Activated CD4-positive, alpha-beta T cell treated with anti-CD3 and anti-CD28 coated beads for 36 hours (primary cell): ENCODE measurements at regions of chr15 and their contacts with region 1.

Region 1: GRCh38 chr15:73972984-73973682 is 19.0 kb downstream of the STOML1 start:
- DNase-seq: peak; percentile 91
- ATAC-seq: peak; percentile 88
- H3K4me3 Mint-ChIP-seq: peak overlapping the region; percentile 8
- H3K27ac Mint-ChIP-seq: no peak overlapping the region
- H3K4me1 Mint-ChIP-seq: peaks cover 27% of the 10 kb centered on the region
- H3K27me3 Mint-ChIP-seq: peaks cover 12% of the 10 kb centered on the region

Region 2: DNA sequence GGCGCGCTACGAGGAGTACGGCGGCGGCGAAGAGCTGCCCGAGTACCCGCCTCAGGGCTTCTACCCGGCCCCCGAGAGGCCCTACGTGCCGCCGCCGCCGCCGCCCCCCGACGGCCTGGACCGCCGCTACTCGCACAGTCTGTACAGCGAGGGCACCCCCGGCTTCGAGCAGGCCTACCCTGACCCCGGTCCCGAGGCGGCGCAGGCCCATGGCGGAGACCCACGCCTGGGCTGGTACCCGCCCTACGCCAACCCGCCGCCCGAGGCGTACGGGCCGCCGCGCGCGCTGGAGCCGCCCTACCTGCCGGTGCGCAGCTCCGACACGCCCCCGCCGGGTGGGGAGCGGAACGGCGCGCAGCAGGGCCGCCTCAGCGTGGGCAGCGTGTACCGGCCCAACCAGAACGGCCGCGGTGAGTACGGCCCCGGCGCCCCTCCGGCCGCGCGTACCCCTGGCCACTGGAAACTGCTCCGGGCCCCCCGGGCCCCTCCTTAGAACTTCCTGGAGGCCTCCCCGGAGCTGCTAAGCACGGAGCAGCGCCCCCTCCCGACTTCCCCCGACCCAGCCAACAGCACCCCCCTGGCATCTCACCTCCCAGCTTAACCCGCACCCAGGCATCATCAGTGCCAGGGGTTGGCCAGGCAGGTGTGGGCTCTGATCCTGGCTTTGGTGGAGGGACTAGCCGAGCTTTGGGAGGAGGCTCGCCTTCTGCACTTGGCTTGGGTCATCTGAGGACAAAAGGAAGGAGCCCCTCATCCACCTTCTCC is 45.5 kb before region 1 on chr15:
- CTCF ChIA-PET with region 1: interaction called, 10 read pairs
- POLR2A ChIA-PET with region 1: no interaction called
- intact Hi-C with region 1: loop called in 1 of 2 experiments (anchors 5 kb)
- DNase-seq: peak; percentile 87
- ATAC-seq: peak; percentile 77
- H3K4me3 Mint-ChIP-seq: peak overlapping the region; percentile 72
- H3K27ac Mint-ChIP-seq: peak overlapping the region; percentile 42
- H3K4me1 Mint-ChIP-seq: peaks cover 35% of the 10 kb centered on the region
- H3K27me3 Mint-ChIP-seq: no peaks in the 10 kb centered on the region

Region 3: DNA sequence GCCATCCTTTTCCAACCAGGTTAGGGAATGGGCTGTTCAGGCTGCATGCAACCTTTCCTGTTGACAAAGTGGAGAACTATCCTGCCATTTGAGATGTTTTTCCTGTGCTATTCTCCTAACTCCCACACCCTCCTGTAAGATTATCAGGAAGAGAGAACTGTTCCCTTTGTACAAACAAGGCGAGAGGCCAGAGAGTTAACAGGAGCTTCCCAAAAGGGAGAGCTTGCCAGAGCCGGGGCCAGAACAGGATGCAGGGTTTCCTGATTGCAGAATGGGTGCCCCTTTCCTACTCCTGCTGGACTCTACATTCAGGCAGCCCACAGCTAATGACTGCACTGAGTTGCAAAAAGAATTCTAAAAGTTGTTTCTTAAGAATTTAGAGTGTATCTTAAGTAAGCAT is 38.5 kb after region 1 on chr15:
- CTCF ChIA-PET with region 1: interaction called, 13 read pairs
- POLR2A ChIA-PET with region 1: interaction called, 6 read pairs
- intact Hi-C with region 1: loop called in 1 of 2 experiments (anchors 5 kb)
- DNase-seq: no peak
- ATAC-seq: no peak
- H3K4me3 Mint-ChIP-seq: no peak overlapping the region
- H3K27ac Mint-ChIP-seq: no peak overlapping the region
- H3K4me1 Mint-ChIP-seq: peaks cover 53% of the 10 kb centered on the region
- H3K27me3 Mint-ChIP-seq: no peaks in the 10 kb centered on the region

Region 4: DNA sequence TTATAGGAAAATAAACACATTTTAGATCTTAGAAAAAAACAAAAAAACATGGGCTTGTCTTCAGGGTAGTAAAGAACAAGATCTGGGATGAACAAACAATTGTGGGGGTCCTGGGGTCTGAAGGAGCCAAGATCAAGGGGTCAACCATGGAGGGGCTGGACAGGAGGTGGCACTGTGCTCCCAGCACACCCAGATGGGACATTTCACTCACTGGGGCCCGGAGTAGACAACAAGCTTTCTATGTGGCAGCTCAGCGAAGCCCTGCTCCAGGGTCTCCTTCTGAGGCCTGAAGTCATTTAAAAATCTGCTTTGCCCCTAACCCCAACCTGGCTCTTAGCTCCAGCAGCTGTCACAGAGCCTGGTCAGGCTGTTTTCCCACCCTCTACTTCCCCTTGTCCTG is 74.6 kb after region 1 on chr15:
- CTCF ChIA-PET with region 1: interaction called, 31 read pairs
- POLR2A ChIA-PET with region 1: no interaction called
- intact Hi-C with region 1: loop called in 1 of 2 experiments (anchors 1 kb)
- DNase-seq: no peak
- ATAC-seq: no peak
- H3K4me3 Mint-ChIP-seq: no peak overlapping the region
- H3K27ac Mint-ChIP-seq: no peak overlapping the region
- H3K4me1 Mint-ChIP-seq: peaks cover 10% of the 10 kb centered on the region
- H3K27me3 Mint-ChIP-seq: no peaks in the 10 kb centered on the region

Region 5: GRCh38 chr15:74127260-74127953 is 154.3 kb after region 1 on chr15:
- CTCF ChIA-PET with region 1: interaction called, 13 read pairs
- POLR2A ChIA-PET with region 1: no interaction called
- intact Hi-C with region 1: loop called (anchors 1 to 5 kb)
- DNase-seq: peak; percentile 94
- ATAC-seq: peak; percentile 96
- H3K4me3 Mint-ChIP-seq: peak overlapping the region; percentile 21
- H3K27ac Mint-ChIP-seq: no peak overlapping the region
- H3K4me1 Mint-ChIP-seq: peaks cover 19% of the 10 kb centered on the region
- H3K27me3 Mint-ChIP-seq: peaks cover 60% of the 10 kb centered on the region

Region 6: GRCh38 chr15:74322181-74323076 is 349.3 kb after region 1 on chr15:
- CTCF ChIA-PET with region 1: interaction called, 10 read pairs
- POLR2A ChIA-PET with region 1: no interaction called
- intact Hi-C with region 1: loop called (anchors 1 to 5 kb)
- DNase-seq: peak; percentile 80
- ATAC-seq: peak; percentile 87
- H3K4me3 Mint-ChIP-seq: no peak overlapping the region
- H3K27ac Mint-ChIP-seq: no peak overlapping the region
- H3K4me1 Mint-ChIP-seq: peaks cover 2% of the 10 kb centered on the region
- H3K27me3 Mint-ChIP-seq: no peaks in the 10 kb centered on the region